ENCODE measurements at regions of chr3 and their contacts with region 1.

Region 1: DNA sequence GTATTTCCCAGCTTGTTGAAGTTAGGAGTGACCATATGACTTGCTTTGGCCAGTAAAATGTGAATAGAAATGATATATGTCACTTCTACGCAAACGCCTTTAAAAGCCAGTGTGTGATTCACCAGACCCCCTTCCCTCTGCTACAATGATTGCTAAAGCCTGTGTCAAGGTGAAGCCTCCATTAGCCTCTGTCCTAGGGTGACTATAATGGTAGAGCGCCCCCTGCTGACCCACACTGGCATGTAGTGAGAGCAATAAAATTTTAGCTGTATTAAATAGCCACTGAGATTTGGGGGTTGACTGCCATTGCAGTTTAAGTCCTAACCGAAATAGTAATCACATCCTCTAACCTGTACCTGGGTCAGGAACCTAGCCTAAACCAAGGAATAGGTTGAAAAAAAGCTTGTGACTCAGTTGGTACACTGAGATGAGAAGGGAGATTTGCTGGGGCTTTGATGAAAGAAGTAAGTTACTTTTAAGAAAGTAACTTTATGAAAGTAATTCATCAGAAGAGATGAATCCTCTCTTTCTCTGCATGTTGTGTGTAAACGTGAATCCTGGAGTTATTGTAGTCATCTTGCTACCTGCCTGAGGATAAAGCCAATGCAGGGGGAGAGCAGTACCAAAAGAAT is 52.6 kb downstream of the GTF2E1 start:
- DNase-seq: peak; percentile 64 to 84 (median 76)
- ATAC-seq: peak; percentile 80 to 93 (median 90)
- H3K4me3 ChIP-seq: no peak overlapping the region
- H3K27ac ChIP-seq: no peak overlapping the region
- H3K4me1 ChIP-seq: no peaks in the 10 kb centered on the region
- H3K27me3 ChIP-seq: no peaks in the 10 kb centered on the region
- CTCF ChIP-seq: peak; percentile 60 to 87 (median 80)
- POLR2A ChIP-seq: no peak

Region 2: DNA sequence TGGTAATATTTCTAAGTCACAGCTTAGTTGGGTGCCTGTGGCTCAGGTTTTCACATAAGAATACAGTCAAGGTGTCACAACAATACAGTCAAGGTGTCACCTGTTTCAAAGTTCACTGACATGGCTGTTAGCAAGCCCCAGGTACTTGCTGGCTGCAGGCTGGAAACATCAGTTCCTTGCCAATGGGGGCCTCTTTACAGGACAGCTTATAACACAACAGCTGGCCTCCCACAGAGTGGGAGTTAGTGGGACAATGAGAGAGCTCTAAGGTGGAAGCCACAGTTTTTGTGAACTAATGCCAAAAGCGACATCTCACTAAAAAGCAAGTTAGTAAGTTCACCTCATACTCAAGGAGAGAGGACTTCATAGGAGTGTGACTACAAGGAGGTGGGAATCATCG is 555.5 kb before region 1 on chr3:
- intact Hi-C with region 1: loop called in 7 of 10 experiments (anchors 2 to 10 kb)
- DNase-seq: no peak
- ATAC-seq: no peak
- H3K4me3 ChIP-seq: no peak overlapping the region
- H3K27ac ChIP-seq: no peak overlapping the region
- H3K4me1 ChIP-seq: no peaks in the 10 kb centered on the region
- H3K27me3 ChIP-seq: peaks cover 0 to 8% (median 0%) of the 10 kb centered on the region in 9 donors
- CTCF ChIP-seq: no peak
- POLR2A ChIP-seq: no peak